ENCODE measurements at regions of chr5 and their contacts with region 1.

Region 1: DNA sequence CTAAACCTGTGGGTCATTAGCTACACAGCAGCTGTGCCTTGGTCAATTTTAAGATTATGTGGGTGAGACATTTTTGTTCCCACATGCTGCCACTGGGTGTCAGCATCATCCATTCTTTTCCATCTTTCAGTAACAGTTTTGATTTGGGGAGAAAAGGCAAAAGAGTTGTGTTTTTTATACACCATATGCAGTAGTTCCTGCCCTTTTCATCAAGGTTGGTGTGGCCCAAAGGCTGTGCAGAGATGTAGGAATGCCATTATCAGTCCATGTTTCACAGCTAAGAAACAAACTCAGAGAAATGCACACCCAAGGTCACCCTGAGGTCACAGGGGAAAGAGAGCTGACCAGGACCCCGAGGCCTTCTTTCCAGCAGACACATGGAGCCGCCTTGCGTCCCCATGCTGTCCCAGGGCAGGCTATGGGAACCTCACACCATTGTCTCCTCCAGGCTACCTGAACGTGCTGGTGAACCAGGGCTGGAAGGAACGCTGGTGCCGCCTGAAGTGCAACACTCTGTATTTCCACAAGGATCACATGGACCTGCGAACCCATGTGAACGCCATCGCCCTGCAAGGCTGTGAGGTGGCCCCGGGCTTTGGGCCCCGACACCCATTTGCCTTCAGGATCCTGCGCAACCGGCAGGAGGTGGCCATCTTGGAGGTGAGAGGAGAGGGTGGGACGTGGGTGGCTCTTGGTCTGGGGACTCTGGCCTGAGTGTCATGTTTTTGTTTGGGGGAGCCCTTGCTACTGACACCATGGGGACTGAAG is 27.8 kb upstream of the GRPEL2 start:
- DNase-seq: peak in 7 of 9 donors; percentile 18 to 66 (median 57)
- ATAC-seq: peak; percentile 77
- H3K4me3 ChIP-seq: no peak overlapping the region
- H3K4me3 Mint-ChIP-seq: no peak overlapping the region
- H3K27ac ChIP-seq: no peak overlapping the region
- H3K27ac Mint-ChIP-seq: peak overlapping the region in 1 of 9 donors; percentile 4
- H3K4me1 ChIP-seq: peaks cover 0 to 3% of the 10 kb centered on the region in 2 donors
- H3K4me1 Mint-ChIP-seq: peaks cover 0 to 5% (median 4%) of the 10 kb centered on the region in 7 donors
- H3K27me3 ChIP-seq: no peaks in the 10 kb centered on the region
- H3K27me3 Mint-ChIP-seq: no peaks in the 10 kb centered on the region

Region 2: GRCh38 chr5:149381987-149382340 is 64.5 kb after region 1 on chr5:
- CTCF ChIA-PET with region 1: interaction called, 147 read pairs
- POLR2A ChIA-PET with region 1: no interaction called
- intact Hi-C with region 1: loop called in 1 of 2 experiments (anchors 1 kb)
- DNase-seq: peak; percentile 41 to 76 (median 62)
- ATAC-seq: peak; percentile 85
- H3K4me3 ChIP-seq: no peak overlapping the region
- H3K4me3 Mint-ChIP-seq: peak overlapping the region in 1 of 10 donors; percentile 46
- H3K27ac ChIP-seq: no peak overlapping the region
- H3K27ac Mint-ChIP-seq: no peak overlapping the region
- H3K4me1 ChIP-seq: no peaks in the 10 kb centered on the region
- H3K4me1 Mint-ChIP-seq: peaks cover 0 to 5% (median 4%) of the 10 kb centered on the region in 7 donors
- H3K27me3 ChIP-seq: no peaks in the 10 kb centered on the region
- H3K27me3 Mint-ChIP-seq: no peaks in the 10 kb centered on the region